ENCODE measurements at regions of chr6 and their contacts with region 1.

Region 1: DNA sequence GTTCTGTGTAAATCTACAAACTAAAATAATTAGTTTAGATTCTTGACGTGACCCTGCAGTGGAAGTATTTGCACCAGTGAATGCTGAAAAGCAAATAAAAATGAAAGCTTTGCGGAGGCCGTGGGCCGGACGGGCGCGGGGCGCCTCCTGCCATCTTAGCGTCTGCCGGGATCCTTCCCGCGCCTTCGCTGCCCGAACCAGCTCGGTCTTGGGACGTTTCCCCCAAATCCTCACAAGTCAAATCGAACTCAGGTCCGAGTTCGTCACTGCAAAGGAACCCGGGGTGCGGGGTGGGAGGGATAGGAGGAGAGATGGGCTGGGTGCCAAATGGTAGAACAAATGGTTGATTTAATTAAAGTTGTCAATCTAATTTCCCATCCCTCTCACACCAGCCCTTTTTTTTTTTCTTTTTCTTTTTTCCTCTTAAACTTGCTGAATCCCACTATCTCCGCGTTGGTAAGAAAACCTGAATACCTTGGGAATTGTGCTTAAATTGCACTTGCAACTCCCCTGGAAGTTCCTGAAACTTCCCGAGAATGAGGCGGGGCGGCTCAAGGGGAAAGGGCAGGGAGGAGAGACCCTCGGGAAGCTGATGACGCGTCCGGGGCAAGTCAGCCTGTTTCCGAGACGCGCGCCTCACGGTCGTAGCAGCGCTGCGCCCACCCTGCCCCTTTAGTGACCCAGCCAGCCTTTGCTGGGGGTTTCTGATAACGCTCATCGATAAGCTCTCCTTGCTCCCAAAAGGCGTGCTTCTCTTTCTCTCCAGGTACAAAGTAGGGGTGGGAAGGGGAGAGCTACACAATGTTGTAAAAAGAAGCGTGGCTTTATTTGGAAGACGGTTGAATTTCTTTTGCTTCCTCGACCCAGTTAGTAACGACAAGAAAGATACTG is 1.8 kb downstream of the GJA1 start:
- DNase-seq: peak; percentile 40
- ATAC-seq: peak; percentile 31
- H3K4me3 ChIP-seq: peak overlapping the region; percentile 89
- H3K27ac ChIP-seq: peak overlapping the region; percentile 96
- H3K4me1 ChIP-seq: peaks cover 10% of the 10 kb centered on the region
- H3K27me3 ChIP-seq: no peaks in the 10 kb centered on the region
- CTCF ChIP-seq: no peak
- POLR2A ChIP-seq: no peak
- RAD21 ChIP-seq: no peak; the same call in 1 of the 2 replicates

Region 2: DNA sequence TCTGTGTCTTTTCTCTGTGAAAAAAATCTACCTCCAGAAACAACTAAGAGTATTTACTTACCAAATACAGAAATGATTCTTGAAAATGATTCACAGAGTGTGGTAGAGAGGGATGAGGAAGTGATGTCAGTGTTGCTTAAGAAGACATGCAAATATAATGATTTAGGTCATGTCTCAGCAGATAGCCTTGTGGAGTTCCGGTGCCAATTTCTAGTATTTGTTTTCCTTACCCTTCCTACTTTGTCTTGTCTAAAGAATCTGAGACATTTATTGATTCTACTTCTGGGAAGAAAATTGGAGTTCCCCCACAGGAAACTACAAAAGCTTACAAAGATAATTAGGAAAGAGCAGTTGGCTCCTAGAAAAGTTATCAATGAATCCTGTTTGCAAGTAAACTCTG is 67.0 kb after region 1 on chr6:
- CTCF ChIA-PET with region 1: no interaction called
- POLR2A ChIA-PET with region 1: no interaction called
- dilution Hi-C with region 1: no loop called
- in situ Hi-C with region 1: no loop called
- intact Hi-C with region 1: loop called (anchors 5 kb)
- DNase-seq: peak; percentile 96
- ATAC-seq: peak; percentile 84
- H3K4me3 ChIP-seq: no peak overlapping the region
- H3K27ac ChIP-seq: peak overlapping the region; percentile 99; the same call in 1 of the 2 replicates
- H3K4me1 ChIP-seq: peaks cover 16% of the 10 kb centered on the region
- H3K27me3 ChIP-seq: no peaks in the 10 kb centered on the region
- CTCF ChIP-seq: no peak
- POLR2A ChIP-seq: no peak
- RAD21 ChIP-seq: no peak

Region 3: GRCh38 chr6:121521892-121522664 is 84.9 kb after region 1 on chr6:
- CTCF ChIA-PET with region 1: no interaction called
- POLR2A ChIA-PET with region 1: interaction called, 3 read pairs
- dilution Hi-C with region 1: no loop called
- in situ Hi-C with region 1: no loop called
- intact Hi-C with region 1: loop called (anchors 2 kb)
- DNase-seq: peak; percentile 96
- ATAC-seq: peak; percentile 74
- H3K4me3 ChIP-seq: peak overlapping the region; percentile 29; the same call in 1 of the 2 replicates
- H3K27ac ChIP-seq: peak overlapping the region; percentile 100
- H3K4me1 ChIP-seq: peaks cover 18% of the 10 kb centered on the region
- H3K27me3 ChIP-seq: no peaks in the 10 kb centered on the region
- CTCF ChIP-seq: no peak
- POLR2A ChIP-seq: no peak
- RAD21 ChIP-seq: peak; percentile 22

Region 4: DNA sequence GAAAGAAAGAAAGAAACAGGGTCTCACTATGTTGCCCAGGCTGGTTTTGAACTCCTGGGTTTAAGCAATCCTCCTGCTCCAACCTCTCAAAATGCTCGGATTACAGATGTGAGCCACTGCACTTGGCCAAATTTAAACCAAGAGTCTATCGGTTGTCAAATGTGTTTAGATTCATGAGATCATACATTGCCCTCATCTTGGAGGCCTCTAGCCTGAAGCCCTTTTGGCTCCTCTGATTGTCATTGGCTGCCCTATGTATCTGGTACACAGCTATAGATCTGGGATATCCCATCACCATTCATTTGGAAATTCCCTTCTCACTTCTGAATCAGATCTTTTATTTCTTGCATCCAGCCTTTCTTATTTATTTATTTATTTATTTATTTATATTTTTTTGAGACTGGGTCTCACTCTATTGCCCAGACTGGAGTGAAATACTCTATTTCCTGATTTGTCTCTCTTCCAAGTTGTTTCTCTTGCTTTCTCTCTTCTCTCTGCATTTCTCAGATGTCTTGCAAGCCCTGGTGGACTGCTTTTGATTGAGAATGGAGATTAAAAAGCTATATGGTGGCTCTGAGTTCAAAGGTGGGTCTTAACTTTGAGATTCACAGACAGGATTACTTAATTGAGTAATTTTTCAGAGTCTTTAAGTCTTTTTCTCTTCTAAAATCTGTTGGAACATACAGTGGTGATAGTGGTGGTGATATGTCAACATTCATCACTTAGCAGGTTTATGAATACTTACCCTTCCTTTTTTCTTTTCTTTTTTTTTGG is 120.1 kb after region 1 on chr6:
- CTCF ChIA-PET with region 1: no interaction called
- POLR2A ChIA-PET with region 1: no interaction called
- dilution Hi-C with region 1: no loop called
- in situ Hi-C with region 1: no loop called
- intact Hi-C with region 1: no loop called
- DNase-seq: no peak
- ATAC-seq: no peak
- H3K4me3 ChIP-seq: no peak overlapping the region
- H3K27ac ChIP-seq: no peak overlapping the region
- H3K4me1 ChIP-seq: no peaks in the 10 kb centered on the region
- H3K27me3 ChIP-seq: no peaks in the 10 kb centered on the region
- CTCF ChIP-seq: no peak
- POLR2A ChIP-seq: no peak
- RAD21 ChIP-seq: no peak

Region 5: DNA sequence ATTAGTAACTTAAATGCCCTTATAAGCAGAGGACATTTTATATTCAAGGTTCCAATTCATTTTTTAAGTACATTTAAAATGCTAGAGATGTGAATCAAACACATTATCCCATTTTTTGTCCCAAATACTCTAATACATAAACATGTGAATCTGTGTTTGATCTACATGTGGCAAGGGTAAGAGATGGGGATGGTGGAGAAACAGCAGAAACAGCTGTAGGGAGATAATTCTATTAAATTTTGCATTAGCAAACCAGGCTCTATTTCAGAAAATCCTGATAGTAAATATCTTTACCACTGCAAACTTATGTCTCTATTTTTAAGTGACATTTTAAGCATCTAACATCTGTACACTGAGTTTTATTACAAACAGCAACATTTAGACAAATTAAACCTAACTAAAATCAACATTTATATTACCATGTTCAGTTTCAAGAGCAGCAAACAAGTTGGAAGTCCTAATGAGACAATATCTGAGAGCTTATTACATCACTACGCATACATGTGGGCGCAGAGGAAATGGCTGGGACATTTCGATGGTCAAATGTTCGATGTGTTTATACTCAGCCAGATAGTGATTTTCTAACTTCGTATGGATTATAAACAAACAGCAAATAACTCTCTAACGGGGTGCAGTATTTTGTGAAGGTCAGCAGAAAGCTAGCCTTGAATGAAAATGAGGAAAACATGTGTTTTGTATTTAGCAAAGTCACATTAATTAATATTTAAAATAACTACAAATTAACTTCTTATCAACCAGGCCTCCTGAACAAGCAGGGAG is 163.4 kb after region 1 on chr6:
- CTCF ChIA-PET with region 1: interaction called, 5 read pairs
- POLR2A ChIA-PET with region 1: no interaction called
- dilution Hi-C with region 1: no loop called
- in situ Hi-C with region 1: loop called (anchors 10 kb)
- intact Hi-C with region 1: loop called (anchors 2 kb)
- DNase-seq: peak; percentile 62
- ATAC-seq: peak; percentile 30
- H3K4me3 ChIP-seq: no peak overlapping the region
- H3K27ac ChIP-seq: no peak overlapping the region
- H3K4me1 ChIP-seq: peaks cover 4% of the 10 kb centered on the region
- H3K27me3 ChIP-seq: no peaks in the 10 kb centered on the region
- CTCF ChIP-seq: no peak
- POLR2A ChIP-seq: no peak
- RAD21 ChIP-seq: no peak

Region 6: DNA sequence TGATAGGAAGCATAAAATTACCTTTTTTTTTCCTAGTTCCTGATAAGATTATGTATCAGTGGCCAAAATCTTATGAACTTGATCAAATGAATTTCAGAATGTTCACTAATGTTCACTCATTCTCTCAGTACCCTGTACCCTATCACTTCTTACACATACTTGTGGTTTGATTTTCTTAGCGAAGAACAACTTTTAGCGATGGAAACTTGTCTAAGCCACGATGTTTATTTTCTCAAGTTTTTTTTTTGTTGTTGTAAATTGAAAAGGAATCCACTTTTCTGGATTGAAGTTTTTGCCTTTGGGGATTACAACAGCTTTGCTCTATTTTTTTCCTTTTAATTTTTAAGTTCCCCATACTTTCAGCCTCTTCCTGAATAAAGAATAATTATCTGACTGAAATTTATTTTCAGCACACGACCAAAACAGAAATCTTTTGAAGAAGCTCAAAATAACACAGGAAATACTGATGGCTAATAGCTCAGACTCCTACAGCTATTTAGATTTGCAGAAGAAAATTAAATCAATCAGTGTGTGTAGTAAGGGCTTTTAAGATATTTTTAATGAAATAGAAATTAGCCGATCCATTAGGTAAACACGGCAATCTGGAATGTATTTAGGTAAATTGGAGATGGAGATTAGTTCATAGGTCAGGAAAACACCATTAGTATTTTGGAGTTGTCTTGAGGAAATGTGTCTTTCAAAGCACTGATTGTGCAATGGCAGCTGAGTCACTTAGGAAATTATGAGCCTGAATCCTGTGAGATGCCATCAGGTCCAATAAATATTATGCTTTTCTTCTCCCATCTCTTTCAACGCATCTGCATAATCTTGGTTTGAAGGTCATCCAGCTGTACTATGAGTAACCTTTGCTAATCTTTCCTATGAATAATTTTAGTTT is 215.8 kb after region 1 on chr6:
- CTCF ChIA-PET with region 1: interaction called, 3 read pairs
- POLR2A ChIA-PET with region 1: no interaction called
- dilution Hi-C with region 1: no loop called
- in situ Hi-C with region 1: no loop called
- intact Hi-C with region 1: loop called (anchors 2 kb)
- DNase-seq: peak; percentile 91
- ATAC-seq: peak; percentile 80
- H3K4me3 ChIP-seq: no peak overlapping the region
- H3K27ac ChIP-seq: no peak overlapping the region
- H3K4me1 ChIP-seq: peaks cover 6% of the 10 kb centered on the region
- H3K27me3 ChIP-seq: no peaks in the 10 kb centered on the region
- CTCF ChIP-seq: no peak
- POLR2A ChIP-seq: no peak
- RAD21 ChIP-seq: no peak

Region 7: DNA sequence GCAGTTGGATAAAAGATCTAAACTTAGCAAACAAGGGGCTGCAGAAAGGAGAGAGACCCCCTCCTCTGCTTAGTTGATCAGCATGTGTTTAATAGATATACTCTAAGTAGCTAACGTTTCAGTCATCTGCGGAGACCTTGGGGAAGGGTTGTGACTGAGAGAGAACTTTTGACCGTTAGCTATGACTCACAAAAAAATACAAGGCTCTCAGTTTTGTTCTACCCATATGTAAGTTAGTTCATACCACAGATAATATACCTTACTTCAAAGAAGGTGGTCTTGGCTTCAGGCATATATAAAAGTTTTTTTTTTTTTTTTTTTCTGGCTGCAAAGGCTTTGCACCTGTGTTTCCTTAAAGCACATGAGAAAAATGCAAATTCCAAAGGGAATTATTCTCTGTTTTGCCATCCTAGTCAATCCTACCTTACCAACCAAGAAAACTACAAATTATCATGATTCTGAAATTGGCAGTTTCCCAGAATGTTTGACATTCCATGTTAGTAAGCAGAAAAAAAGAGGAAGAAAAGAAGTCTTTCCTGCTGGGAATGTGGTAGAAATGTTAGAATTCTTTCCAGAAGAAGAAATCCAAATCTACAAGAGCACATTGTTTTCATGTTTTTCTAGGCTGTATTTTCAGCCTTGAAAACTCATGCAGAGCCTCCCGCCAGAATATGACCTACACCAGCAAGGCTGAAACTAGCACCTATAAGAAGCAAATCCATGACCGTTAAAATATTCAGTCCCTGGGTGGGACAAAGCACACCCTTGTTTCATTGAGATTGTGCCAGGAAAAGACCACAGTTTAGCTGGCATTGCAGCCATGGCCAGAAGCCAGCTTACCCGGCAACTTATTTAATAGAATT is 257.4 kb after region 1 on chr6:
- CTCF ChIA-PET with region 1: interaction called, 7 read pairs
- POLR2A ChIA-PET with region 1: interaction called, 4 read pairs
- dilution Hi-C with region 1: no loop called
- in situ Hi-C with region 1: no loop called
- intact Hi-C with region 1: loop called (anchors 1 kb)
- DNase-seq: peak; percentile 45
- ATAC-seq: no peak
- H3K4me3 ChIP-seq: no peak overlapping the region
- H3K27ac ChIP-seq: 0 out of 2 replicates have a peak overlapping the region, but pooled peaks have one; percentile 40
- H3K4me1 ChIP-seq: peaks cover 19% of the 10 kb centered on the region
- H3K27me3 ChIP-seq: no peaks in the 10 kb centered on the region
- CTCF ChIP-seq: no peak
- POLR2A ChIP-seq: no peak
- RAD21 ChIP-seq: no peak

Region 8: DNA sequence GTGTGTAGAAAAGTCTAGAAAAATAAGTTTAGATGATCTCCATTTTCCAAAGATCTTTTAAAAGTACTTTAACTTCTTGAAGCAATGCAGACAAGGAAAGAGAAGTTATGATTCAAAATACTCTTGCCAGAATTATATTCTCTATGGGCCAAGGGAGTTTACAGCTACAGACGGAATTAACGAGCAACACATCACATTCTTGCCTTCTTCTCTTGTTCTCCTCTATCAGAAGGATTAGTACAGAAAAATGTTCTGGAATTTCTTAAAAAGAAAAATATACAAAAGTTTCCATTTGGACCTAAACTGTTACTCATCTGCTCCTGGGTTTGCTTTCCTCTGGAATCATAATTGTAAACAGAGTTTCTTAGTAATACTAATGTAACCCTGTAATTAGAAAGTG is 677.5 kb after region 1 on chr6:
- CTCF ChIA-PET with region 1: no interaction called
- POLR2A ChIA-PET with region 1: no interaction called
- dilution Hi-C with region 1: no loop called
- in situ Hi-C with region 1: no loop called
- intact Hi-C with region 1: loop called (anchors 5 kb)
- DNase-seq: peak; percentile 3
- ATAC-seq: peak; percentile 87
- H3K4me3 ChIP-seq: no peak overlapping the region
- H3K27ac ChIP-seq: no peak overlapping the region
- H3K4me1 ChIP-seq: no peaks in the 10 kb centered on the region
- H3K27me3 ChIP-seq: no peaks in the 10 kb centered on the region; the same call in 1 of the 2 replicates
- CTCF ChIP-seq: no peak
- POLR2A ChIP-seq: no peak
- RAD21 ChIP-seq: no peak